Posterior vena cava (tissue), 2 donors: ENCODE measurements at regions of chr21 and their contacts with region 1.

Region 1: GRCh38 chr21:45763074-45763473 is 119.5 kb downstream of the PCBP3 start:
- DNase-seq: no peak

Region 2: GRCh38 chr21:45698493-45699184 is 64.4 kb before region 1 on chr21:
- intact Hi-C with region 1: no loop called
- DNase-seq: peak; percentile 89

Region 3: GRCh38 chr21:45774291-45774690 is 11.2 kb after region 1 on chr21:
- intact Hi-C with region 1: loop called in 1 of 2 experiments (anchors 1 kb)
- DNase-seq: no peak

Region 4: GRCh38 chr21:46295996-46296752 is 533.1 kb after region 1 on chr21:
- intact Hi-C with region 1: no loop called
- DNase-seq: no peak